MCF 10A (cell line): ENCODE measurements at regions of chr2 and their contacts with region 1.

Region 1: DNA sequence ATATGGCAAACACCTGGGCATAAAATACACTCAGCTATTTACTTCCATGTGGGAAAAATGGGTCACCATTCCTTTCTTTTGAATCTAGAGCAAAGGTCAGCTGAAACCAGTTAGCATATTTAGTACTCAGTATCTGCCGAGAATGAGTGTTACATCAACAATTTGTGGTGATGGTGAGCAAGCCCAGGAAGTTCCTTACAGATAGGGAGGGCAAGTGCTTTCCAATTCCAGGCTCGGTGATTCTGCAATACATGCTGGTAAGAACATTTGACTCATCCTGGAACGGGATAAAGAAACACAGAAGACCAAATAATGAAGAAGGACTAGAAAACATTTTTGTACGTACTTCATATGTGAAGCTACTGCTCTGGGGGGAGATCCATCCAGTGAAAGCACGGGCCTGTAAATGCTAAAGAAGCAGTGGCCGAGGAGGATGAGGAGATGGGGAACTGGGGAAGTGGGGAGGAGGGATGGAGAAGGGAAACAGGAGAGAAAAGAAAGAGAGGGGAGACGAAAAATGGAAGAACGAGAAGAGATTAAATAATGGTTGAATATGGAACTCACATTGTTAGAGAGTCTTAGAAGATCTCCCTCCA is 251.9 kb downstream of the TTC32 start:
- DNase-seq: peak; percentile 98
- H3K4me3 Mint-ChIP-seq: peak overlapping the region; percentile 67
- H3K27ac Mint-ChIP-seq: peak overlapping the region; percentile 98
- H3K4me1 Mint-ChIP-seq: peaks cover 40% of the 10 kb centered on the region
- H3K27me3 Mint-ChIP-seq: no peaks in the 10 kb centered on the region
- CTCF ChIP-seq: no peak

Region 2: DNA sequence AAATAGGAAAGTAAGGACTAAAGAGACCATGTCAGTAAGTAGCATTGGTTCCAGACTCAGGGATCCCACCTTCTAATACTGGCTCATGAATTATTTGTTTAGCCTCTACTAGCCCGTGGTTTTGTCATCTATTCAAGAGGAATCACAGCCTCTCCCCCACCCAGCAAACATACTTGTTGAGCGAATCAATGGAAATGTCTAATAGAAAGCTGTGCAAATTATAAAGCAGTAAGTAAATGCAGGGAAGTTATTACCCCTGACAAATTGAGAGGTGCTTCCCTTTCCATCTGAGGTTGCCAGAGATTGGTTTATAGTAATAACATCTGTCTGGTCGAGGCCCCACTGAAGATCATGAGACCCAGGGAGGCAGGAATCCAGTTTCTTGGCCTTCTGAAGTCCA is 72.2 kb before region 1 on chr2:
- CTCF ChIA-PET with region 1: no interaction called
- POLR2A ChIA-PET with region 1: interaction called, 4 read pairs
- intact Hi-C with region 1: loop called (anchors 2 kb)
- DNase-seq: no peak
- H3K4me3 Mint-ChIP-seq: no peak overlapping the region
- H3K27ac Mint-ChIP-seq: no peak overlapping the region
- H3K4me1 Mint-ChIP-seq: peaks cover 21% of the 10 kb centered on the region
- H3K27me3 Mint-ChIP-seq: no peaks in the 10 kb centered on the region
- CTCF ChIP-seq: no peak

Region 3: GRCh38 chr2:19611491-19612332 is 38.2 kb before region 1 on chr2:
- CTCF ChIA-PET with region 1: no interaction called
- POLR2A ChIA-PET with region 1: no interaction called
- intact Hi-C with region 1: loop called (anchors 2 kb)
- DNase-seq: peak; percentile 82
- H3K4me3 Mint-ChIP-seq: no peak overlapping the region
- H3K27ac Mint-ChIP-seq: peak overlapping the region; percentile 32
- H3K4me1 Mint-ChIP-seq: peaks cover 21% of the 10 kb centered on the region
- H3K27me3 Mint-ChIP-seq: no peaks in the 10 kb centered on the region
- CTCF ChIP-seq: no peak

Region 4: GRCh38 chr2:19711470-19712372 is 61.8 kb after region 1 on chr2:
- CTCF ChIA-PET with region 1: no interaction called
- POLR2A ChIA-PET with region 1: interaction called, 4 read pairs
- intact Hi-C with region 1: loop called (anchors 2 kb)
- DNase-seq: peak; percentile 86
- H3K4me3 Mint-ChIP-seq: no peak overlapping the region
- H3K27ac Mint-ChIP-seq: peak overlapping the region; percentile 47
- H3K4me1 Mint-ChIP-seq: peaks cover 20% of the 10 kb centered on the region
- H3K27me3 Mint-ChIP-seq: no peaks in the 10 kb centered on the region
- CTCF ChIP-seq: no peak

Region 5: DNA sequence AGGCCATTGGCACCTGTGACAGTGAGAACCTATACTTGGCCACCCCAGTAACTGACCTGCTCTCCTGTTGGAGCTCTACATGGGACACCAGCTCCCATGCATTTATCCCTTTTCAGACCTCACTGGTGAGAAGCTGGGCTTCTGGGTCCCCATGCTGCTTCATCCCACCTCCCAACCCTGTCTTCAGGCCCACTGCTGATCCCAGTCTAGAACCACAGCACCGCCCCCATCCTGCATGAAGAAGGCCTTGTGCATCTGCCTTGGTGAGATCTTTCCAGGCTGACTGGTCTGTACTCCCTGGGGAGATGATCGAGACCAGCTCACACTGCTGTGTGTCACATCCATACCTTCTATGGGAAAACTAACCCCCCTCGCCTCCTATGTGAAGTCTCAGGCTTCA is 229.2 kb after region 1 on chr2:
- CTCF ChIA-PET with region 1: no interaction called
- POLR2A ChIA-PET with region 1: no interaction called
- intact Hi-C with region 1: no loop called
- DNase-seq: no peak
- H3K4me3 Mint-ChIP-seq: no peak overlapping the region
- H3K27ac Mint-ChIP-seq: no peak overlapping the region
- H3K4me1 Mint-ChIP-seq: no peaks in the 10 kb centered on the region
- H3K27me3 Mint-ChIP-seq: no peaks in the 10 kb centered on the region
- CTCF ChIP-seq: no peak